ENCODE measurements at regions of chr4 and their contacts with region 1.

Region 1: GRCh38 chr4:111283061-111283677 is 660.3 kb upstream of the PITX2 start:
- H3K4me3 Mint-ChIP-seq: no peak overlapping the region
- H3K27ac Mint-ChIP-seq: no peak overlapping the region
- H3K4me1 Mint-ChIP-seq: no peaks in the 10 kb centered on the region
- H3K27me3 Mint-ChIP-seq: peaks cover 7% of the 10 kb centered on the region

Region 2: GRCh38 chr4:109998867-109999584 is 1284.1 kb before region 1 on chr4:
- intact Hi-C with region 1: loop called (anchors 5 kb)
- H3K4me3 Mint-ChIP-seq: no peak overlapping the region
- H3K27ac Mint-ChIP-seq: no peak overlapping the region
- H3K4me1 Mint-ChIP-seq: peaks cover 22% of the 10 kb centered on the region
- H3K27me3 Mint-ChIP-seq: peaks cover 63% of the 10 kb centered on the region

Region 3: GRCh38 chr4:110631584-110632505 is 651.3 kb before region 1 on chr4:
- intact Hi-C with region 1: loop called (anchors 1 kb)
- H3K4me3 Mint-ChIP-seq: peak overlapping the region; percentile 41
- H3K27ac Mint-ChIP-seq: no peak overlapping the region
- H3K4me1 Mint-ChIP-seq: peaks cover 15% of the 10 kb centered on the region
- H3K27me3 Mint-ChIP-seq: peaks cover 91% of the 10 kb centered on the region

Region 4: DNA sequence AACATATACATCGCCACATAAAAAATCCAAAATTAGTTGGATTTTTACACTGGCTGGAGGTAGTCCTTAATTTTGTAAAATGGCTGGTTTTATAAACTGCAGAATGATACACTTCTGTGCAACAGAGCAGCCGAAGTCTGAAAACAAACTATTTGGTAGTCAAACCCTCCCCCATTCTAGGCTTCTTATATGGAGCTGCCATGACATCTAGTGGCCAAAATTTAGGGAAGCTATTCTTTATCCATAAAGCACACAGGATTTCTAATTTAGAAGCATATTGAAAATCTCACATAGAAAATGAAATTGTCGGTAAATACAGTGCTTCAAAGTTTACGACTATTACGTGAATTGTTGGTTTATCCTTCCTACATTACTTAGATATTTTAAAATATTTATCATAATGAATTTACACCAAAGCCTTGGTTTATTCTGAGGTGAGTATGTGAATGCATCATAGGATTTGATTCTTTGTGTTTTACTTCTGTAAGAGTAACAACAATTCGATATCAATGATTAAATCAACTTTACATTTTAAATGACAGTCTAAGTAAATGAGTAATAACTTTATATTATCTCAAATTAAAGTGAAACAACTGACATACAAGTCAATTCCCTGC is 748.7 kb after region 1 on chr4:
- intact Hi-C with region 1: loop called (anchors 10 kb)
- H3K4me3 Mint-ChIP-seq: no peak overlapping the region
- H3K27ac Mint-ChIP-seq: no peak overlapping the region
- H3K4me1 Mint-ChIP-seq: no peaks in the 10 kb centered on the region
- H3K27me3 Mint-ChIP-seq: peaks cover 26% of the 10 kb centered on the region

Measured in dendritic cell treated with granulocyte-macrophage colony-stimulating factor and Interleukin-4, amounts not matched to agents 40 ng/mL and 50 ng/mL, for 4 days (primary cell).